Lower leg skin (tissue), 4 donors: ENCODE measurements at regions of chr3 and their contacts with region 1.

Region 1: DNA sequence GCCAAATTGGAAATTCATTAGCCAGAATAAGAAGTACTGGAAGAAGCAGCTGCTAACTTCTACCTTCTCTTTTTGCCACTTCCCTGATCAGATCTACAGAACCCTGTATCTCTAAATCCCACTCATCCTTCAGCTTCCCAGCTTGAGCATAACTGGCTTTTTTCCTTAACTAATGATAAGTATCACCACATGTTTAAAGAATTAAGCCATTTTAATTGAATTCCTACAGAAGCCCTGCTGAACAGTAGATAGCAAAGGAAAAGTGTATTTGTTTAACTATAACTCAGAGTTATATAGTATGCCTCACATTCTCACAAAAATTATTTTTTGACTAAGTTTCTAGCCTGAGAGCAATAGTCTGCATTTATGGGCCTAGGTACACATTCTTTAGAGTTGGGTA is 262.4 kb downstream of the UBE2E2 start:
- DNase-seq: no peak
- H3K4me3 ChIP-seq: no peak overlapping the region
- CTCF ChIP-seq: no peak
- POLR2A ChIP-seq: no peak

Region 2: GRCh38 chr3:22729985-22730384 is 735.6 kb before region 1 on chr3:
- intact Hi-C with region 1: loop called (anchors 5 kb)
- DNase-seq: no peak
- H3K4me3 ChIP-seq: no peak overlapping the region
- CTCF ChIP-seq: no peak
- POLR2A ChIP-seq: no peak

Region 3: GRCh38 chr3:23129817-23130216 is 335.8 kb before region 1 on chr3:
- intact Hi-C with region 1: no loop called
- DNase-seq: no peak
- H3K4me3 ChIP-seq: no peak overlapping the region
- CTCF ChIP-seq: no peak
- POLR2A ChIP-seq: no peak